ENCODE measurements at regions of chr7 and their contacts with region 1.

Region 1: DNA sequence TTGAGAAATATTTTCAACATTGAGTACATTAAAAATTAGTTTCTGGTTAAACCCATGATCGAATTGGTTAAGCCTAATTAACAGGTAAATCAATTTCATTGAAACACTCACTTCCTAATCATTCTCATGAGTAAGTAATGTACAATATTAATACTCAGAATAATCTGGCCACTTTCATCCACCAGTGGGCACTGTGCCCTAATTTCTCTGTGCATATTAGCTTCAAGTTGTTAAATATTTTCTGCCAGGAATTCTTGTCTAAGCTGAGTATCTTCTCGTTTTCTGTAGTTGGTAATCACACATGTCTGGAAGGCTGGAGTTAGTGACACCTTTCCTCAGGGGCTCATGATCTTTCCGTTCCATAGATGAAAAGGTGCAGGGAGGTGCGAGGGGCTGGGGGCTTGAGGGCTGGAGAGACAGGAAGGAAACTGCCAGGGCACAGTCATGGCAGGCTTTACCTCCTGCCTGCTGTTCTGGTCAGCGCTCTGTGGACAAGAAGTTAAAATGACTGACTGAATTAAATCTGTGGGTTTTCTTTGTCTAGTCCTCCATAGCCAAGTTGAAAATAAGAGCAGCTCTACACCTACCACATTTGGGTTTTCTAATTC is 71.9 kb downstream of the WIPF3 start:
- DNase-seq: no peak
- ATAC-seq: peak; percentile 31
- H3K4me3 Mint-ChIP-seq: no peak overlapping the region
- H3K27ac Mint-ChIP-seq: no peak overlapping the region
- H3K4me1 Mint-ChIP-seq: peaks cover 3% of the 10 kb centered on the region
- H3K27me3 Mint-ChIP-seq: peaks cover 12% of the 10 kb centered on the region
- CTCF ChIP-seq: peak; percentile 37

Region 2: DNA sequence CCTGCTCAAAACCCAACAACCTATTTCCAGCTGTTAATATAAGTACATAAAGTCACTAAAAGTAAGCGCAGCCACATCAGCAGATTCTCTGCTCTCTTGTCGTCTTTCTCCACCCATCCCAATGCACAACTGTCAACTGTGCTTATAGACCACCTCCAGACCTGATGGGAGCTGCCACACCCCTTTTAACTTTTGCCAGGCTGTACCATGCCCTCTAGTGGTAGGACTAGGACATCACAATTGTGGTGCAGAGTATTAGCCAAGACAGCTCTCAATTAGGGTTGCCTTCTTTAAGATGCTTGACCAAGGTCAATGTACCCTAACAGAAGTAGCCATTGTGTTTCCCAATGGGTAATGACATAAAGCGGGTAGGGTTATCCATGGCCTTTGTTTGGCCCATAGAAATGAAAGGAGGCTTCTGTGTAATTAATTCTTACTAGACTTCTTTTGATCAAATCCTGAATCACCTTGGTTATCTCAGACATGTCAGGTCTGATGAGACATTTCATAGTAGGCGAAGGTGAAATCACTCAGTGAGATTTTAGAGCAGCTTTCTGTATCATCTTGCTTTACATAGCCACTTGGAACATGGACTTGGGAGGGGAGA is 43.3 kb after region 1 on chr7:
- CTCF ChIA-PET with region 1: interaction called, 8 read pairs
- POLR2A ChIA-PET with region 1: no interaction called
- intact Hi-C with region 1: loop called (anchors 1 kb)
- DNase-seq: no peak
- ATAC-seq: peak; percentile 97
- H3K4me3 Mint-ChIP-seq: no peak overlapping the region
- H3K27ac Mint-ChIP-seq: no peak overlapping the region
- H3K4me1 Mint-ChIP-seq: no peaks in the 10 kb centered on the region
- H3K27me3 Mint-ChIP-seq: no peaks in the 10 kb centered on the region
- CTCF ChIP-seq: no peak

Region 3: GRCh38 chr7:30074422-30075030 is 196.3 kb after region 1 on chr7:
- CTCF ChIA-PET with region 1: interaction called, 26 read pairs
- POLR2A ChIA-PET with region 1: no interaction called
- intact Hi-C with region 1: loop called (anchors 1 kb)
- DNase-seq: no peak
- ATAC-seq: no peak
- H3K4me3 Mint-ChIP-seq: no peak overlapping the region
- H3K27ac Mint-ChIP-seq: no peak overlapping the region
- H3K4me1 Mint-ChIP-seq: peaks cover 1% of the 10 kb centered on the region
- H3K27me3 Mint-ChIP-seq: no peaks in the 10 kb centered on the region
- CTCF ChIP-seq: no peak